Ascending aorta (tissue), 2 donors: ENCODE measurements at regions of chr17 and their contacts with region 1.

Region 1: DNA sequence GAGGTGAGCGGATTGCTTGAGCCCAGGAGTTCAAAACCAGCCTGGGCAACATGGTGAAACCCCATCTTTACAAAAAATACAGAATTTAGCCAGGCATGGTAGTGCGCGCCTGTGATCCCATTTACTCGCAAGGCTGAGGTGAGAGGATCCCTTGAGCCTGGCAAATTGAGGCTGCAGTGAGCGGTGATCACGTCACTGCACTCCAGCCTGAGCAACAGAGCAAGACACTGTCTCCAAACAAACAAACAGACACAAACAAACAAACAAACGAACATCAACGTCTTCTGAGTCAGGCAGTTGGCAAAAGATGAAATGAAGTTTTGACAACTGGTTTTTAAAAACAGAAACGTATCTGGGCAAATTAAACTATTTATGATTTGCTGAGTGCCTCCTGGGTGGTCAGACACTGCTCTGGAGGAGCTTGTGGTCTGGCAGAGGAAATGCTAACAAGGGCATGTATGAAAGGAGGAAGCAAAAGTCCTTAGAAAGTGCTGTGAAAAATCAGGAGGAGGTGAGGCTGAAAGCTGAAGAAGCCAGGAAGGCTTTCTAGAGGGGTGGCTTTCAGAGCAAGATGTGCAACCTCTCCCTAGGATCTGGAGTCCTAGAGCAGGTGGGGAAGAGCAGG is 10.2 kb upstream of the KRT20 start:
- DNase-seq: no peak
- H3K4me3 ChIP-seq: no peak overlapping the region
- H3K27ac ChIP-seq: no peak overlapping the region
- H3K4me1 ChIP-seq: no peaks in the 10 kb centered on the region
- H3K27me3 ChIP-seq: no peaks in the 10 kb centered on the region
- CTCF ChIP-seq: no peak

Region 2: GRCh38 chr17:40827746-40828453 is 67.3 kb before region 1 on chr17:
- intact Hi-C with region 1: no loop called
- DNase-seq: peak; percentile 8 to 67
- H3K4me3 ChIP-seq: peak overlapping the region in 1 of 2 donors; percentile 41
- H3K27ac ChIP-seq: peak overlapping the region; percentile 86 to 89
- H3K4me1 ChIP-seq: peaks cover 16 to 32% of the 10 kb centered on the region in 2 donors
- H3K27me3 ChIP-seq: no peaks in the 10 kb centered on the region
- CTCF ChIP-seq: no peak

Region 3: GRCh38 chr17:41439389-41439788 is 544.2 kb after region 1 on chr17:
- intact Hi-C with region 1: loop called (anchors 5 kb)
- DNase-seq: no peak
- H3K4me3 ChIP-seq: no peak overlapping the region
- H3K27ac ChIP-seq: no peak overlapping the region
- H3K4me1 ChIP-seq: no peaks in the 10 kb centered on the region
- H3K27me3 ChIP-seq: no peaks in the 10 kb centered on the region
- CTCF ChIP-seq: no peak